ENCODE measurements at regions of chr5 and their contacts with region 1.

Region 1: GRCh38 chr5:59275510-59276324 is 617.8 kb downstream of the PDE4D start:
- DNase-seq: no peak
- CTCF ChIP-seq: no peak

Region 2: GRCh38 chr5:59264639-59265240 is 11.0 kb before region 1 on chr5:
- CTCF ChIA-PET with region 1: interaction called, 11 read pairs
- POLR2A ChIA-PET with region 1: no interaction called
- DNase-seq: no peak
- CTCF ChIP-seq: no peak